ENCODE measurements at regions of chr10 and their contacts with region 1.

Region 1: DNA sequence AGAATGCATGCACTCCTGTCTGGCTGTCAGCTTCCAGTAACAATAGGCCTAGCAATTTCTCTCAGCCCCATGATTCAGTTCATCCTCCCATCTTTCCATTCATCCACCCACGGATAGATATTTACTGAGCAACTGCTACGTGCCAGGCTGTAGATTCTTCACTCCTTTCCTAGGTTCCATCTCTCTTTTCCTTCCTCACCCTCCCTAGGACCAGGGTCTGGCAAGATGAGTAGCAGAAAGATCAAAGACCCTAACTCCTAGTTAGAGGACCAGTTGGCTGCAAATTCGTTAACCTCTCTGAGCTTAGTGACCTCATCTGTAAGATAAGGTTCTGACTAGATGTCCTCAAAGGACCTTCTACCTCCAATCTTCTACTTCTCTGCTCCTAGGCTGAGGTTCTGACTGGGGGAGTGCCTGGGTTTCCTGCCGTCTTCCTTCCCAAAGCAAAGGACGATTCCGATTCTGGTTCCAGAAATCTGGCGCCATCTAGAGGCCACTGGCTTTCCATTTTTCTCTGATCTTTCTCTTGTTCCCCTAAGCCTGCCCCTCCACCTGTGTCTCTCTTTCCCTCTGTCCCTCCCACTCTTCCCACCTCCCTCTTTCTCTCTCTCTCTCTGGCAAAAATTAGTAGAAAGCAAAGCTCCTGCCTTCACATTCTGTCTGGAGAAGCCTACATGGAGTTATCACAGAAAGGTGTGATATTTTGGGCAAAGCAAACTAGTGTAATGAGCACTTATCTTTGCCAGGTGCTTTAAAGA is 26.2 kb downstream of the TBATA start:
- DNase-seq: no peak
- H3K4me3 ChIP-seq: no peak overlapping the region
- H3K27me3 ChIP-seq: no peaks in the 10 kb centered on the region; the same call in 1 of the 2 replicates
- CTCF ChIP-seq: peak; percentile 82

Region 2: GRCh38 chr10:70549962-70550458 is 208.9 kb before region 1 on chr10:
- CTCF ChIA-PET with region 1: interaction called, 171 read pairs
- POLR2A ChIA-PET with region 1: interaction called, 4 read pairs
- DNase-seq: no peak
- H3K4me3 ChIP-seq: no peak overlapping the region
- H3K27me3 ChIP-seq: no peaks in the 10 kb centered on the region
- CTCF ChIP-seq: peak; percentile 86

Region 3: DNA sequence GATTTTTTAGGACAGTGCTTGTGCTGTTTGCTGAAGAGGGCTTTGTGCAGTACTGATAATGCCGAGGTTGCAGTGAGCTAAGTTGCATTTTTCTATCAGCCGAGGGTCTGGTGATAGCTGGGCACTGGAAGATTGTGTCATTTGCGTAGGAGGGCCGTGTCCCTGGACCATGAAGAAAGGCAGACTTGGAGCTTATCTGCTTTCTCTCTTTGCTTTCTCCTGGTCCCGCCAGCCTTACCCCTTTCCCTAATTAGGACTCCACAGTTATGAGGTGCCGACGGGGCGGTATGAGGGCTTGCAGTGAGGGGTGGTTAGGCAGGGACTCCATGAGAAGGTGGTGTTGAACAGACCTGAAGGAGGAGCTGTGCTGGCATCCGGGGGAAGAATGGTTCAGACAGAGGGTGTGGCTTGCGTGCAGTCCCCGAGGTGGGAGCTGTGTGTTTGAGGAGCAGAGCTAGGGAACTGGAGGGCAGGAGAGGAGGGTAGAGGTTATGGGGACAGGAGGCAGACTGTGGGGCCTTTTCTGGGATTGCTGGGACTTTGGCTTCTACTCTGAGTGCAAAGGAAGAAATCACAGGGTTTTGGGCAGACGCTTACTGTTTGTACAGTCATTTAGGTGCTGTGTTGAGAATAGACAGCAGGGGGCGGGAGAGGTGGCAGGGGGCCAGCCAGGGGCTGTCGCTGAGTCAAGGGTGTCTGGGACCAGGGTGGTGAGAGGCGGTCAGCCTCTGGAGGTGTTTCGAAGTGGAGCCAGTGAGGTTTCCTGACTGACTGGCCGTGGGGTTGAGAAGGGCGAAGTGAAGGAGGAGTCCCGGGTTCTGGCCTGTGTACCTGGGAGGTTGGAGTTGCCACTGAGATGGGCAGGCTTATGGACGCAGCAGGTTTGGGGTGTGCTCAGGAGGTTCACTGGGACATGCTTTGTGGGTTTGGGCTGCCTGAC is 199.8 kb before region 1 on chr10:
- CTCF ChIA-PET with region 1: interaction called, 171 read pairs
- POLR2A ChIA-PET with region 1: no interaction called
- DNase-seq: no peak
- H3K4me3 ChIP-seq: no peak overlapping the region
- H3K27me3 ChIP-seq: no peaks in the 10 kb centered on the region; the same call in 1 of the 2 replicates
- CTCF ChIP-seq: peak; percentile 65

Region 4: DNA sequence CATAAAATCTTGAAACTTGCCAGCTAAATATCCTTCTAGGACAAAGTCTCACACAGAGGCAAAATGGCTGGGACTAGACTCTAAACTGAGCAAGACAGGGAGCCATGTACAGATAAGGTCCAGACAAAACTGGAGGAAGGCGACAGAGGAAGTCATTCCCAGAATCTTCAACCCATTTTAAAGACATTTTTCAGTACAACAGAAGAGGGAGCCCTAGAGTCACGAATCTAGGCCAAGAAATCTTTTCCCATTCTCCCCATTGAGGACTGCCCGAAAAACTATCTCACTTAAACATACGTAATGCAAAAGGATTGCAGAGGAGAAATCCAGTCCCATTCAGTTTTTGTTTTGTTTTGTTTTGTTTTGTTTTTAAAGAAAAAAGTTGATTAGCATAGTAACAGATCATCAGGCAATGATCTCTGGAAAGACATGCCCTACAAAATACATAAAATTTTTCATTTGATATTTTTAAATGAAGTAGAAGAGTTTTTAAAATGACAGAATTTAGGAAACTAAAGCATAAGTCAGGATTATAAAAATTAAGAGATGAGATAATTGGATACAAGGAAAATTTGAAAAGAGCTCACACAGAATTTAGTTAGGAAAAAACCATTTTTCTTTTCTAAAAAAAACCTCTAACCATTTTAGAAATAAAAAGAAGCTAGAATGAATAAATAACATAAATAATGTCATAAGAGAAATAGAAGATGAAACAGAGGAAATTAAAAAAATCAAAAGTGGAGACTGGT is 139.5 kb before region 1 on chr10:
- CTCF ChIA-PET with region 1: interaction called, 39 read pairs
- POLR2A ChIA-PET with region 1: no interaction called
- DNase-seq: no peak
- H3K4me3 ChIP-seq: no peak overlapping the region
- H3K27me3 ChIP-seq: peaks cover 7% of the 10 kb centered on the region; the same call in 1 of the 2 replicates
- CTCF ChIP-seq: peak; percentile 42; the same call in 1 of the 2 replicates

Region 5: DNA sequence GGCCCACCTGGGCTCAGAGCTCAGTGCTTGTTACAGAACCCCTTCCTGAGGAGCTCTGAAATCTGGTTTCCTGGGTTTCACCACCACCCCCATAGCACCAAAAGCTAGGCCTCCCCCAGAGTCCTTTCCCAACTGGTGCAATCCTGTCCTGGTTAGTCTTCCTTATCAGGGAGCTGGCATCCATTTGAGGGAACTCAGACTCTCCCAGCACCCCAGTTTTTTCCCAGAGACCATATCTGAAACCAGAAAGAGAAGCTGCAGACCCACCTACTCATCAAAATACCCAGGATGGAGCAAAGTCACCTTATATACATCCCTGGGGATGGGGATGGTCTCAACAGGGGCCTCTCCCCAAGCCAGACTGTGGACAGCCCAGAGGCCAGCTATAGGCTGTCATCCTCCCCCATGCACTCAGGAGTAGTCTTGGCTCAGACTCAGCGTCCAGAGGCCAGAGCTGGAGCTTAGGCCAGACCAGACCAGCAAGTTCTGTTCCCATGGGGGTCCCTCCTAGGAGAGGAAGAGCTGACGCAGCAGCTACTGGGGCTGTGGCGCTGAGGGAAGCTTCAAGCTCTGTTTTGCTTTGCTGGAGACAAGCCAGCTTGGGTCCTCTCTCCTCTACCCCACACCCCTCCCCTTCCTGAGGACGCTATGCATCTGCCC is 23.3 kb after region 1 on chr10:
- CTCF ChIA-PET with region 1: no interaction called
- POLR2A ChIA-PET with region 1: no interaction called
- DNase-seq: no peak
- H3K4me3 ChIP-seq: no peak overlapping the region
- H3K27me3 ChIP-seq: peaks cover 7% of the 10 kb centered on the region
- CTCF ChIP-seq: no peak

Region 6: DNA sequence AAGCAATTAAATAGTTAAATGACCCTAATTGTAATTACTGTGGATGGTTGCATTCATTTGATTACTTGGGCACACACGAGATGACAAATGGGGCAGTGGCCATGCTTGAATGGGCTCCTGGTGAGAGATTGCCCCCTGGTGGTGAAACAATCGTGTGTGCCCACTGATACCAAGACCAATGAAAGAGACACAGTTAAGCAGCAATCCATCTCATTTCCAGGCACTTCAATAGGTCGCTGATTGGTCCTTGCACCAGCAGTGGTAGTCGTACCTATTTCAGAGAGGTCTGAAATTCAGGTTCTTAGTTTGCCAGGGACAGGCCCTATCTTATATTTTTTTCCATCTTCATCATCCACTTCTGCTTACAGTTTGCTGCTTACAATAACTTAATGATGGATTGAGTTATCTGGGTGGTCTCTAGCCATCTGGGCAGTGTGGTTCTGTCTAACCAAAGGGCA is 121.2 kb after region 1 on chr10:
- CTCF ChIA-PET with region 1: interaction called, 24 read pairs
- POLR2A ChIA-PET with region 1: no interaction called
- DNase-seq: no peak
- H3K4me3 ChIP-seq: no peak overlapping the region
- H3K27me3 ChIP-seq: no peaks in the 10 kb centered on the region
- CTCF ChIP-seq: peak; percentile 92

Region 7: GRCh38 chr10:70913191-70913892 is 154.4 kb after region 1 on chr10:
- CTCF ChIA-PET with region 1: no interaction called
- POLR2A ChIA-PET with region 1: no interaction called
- DNase-seq: no peak
- H3K4me3 ChIP-seq: no peak overlapping the region
- H3K27me3 ChIP-seq: peaks cover 13% of the 10 kb centered on the region
- CTCF ChIP-seq: no peak